ENCODE measurements at regions of chr11 and their contacts with region 1.

Region 1: DNA sequence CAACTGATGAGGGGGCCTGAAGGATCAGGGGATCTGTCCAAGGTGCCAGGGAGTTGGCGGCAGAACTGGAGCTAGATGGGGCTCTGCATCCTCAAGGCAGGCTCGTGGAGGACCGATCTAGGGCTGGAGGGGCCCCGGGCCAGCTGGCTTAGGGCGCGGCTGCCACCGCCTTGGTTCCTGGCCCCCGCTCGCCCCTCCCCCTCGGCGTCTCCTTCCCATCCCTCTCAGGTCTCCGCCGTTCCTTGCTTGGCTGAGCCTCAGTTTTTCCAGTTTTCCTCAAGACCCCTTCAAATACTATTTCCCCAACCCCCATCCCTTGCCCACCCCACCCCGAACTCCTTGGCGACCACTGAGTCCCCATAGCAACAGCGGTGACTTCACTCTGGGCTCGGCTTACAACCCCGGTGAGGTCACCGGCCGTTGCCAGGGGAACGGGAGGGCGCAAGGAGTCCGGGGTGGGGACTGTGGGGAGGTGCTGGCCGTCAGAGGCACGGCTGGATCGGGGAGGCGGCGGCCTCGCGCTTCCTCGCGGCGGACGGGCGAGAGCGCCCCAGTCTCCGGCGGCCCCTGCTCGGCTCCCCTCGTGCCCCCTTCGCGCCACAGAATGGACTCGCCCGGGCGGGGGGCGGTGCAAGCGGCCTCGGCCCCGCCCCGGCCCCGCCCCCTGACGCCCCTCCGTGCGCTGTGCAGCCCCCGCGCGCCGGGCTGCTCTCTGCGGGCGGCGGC is 7.5 kb downstream of the FREY1 start:
- DNase-seq: peak; percentile 96

Region 2: DNA sequence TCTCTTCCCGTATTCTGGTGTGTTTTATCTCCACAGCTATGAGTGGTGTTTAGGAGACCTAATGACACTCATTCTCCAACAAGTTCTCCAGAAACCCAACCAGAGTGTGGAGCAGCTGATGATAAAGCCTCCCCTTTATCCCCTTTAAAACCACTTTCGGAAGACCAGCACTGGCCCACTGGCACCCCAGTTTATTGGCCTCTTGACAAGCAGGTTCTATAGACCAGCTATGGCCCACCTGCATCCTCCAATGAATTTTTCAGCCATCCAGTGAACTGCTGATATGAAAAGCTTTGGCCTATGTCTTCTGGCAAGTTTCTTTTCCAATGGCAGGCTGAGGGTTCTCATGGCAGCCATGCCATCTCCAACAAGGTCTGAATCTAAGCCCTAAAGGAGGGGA is 261.6 kb before region 1 on chr11:
- intact Hi-C with region 1: no loop called
- DNase-seq: no peak

Region 3: GRCh38 chr11:45804761-45805304 is 94.8 kb before region 1 on chr11 and contains the start of gene SLC35C1:
- intact Hi-C with region 1: loop called in 1 of 2 experiments (anchors 5 kb)
- DNase-seq: peak; percentile 99
- total RNA-seq, gene SLC35C1: 13.4 to 13.6 TPM